ENCODE measurements at regions of chr1 and their contacts with region 1.

Region 1: DNA sequence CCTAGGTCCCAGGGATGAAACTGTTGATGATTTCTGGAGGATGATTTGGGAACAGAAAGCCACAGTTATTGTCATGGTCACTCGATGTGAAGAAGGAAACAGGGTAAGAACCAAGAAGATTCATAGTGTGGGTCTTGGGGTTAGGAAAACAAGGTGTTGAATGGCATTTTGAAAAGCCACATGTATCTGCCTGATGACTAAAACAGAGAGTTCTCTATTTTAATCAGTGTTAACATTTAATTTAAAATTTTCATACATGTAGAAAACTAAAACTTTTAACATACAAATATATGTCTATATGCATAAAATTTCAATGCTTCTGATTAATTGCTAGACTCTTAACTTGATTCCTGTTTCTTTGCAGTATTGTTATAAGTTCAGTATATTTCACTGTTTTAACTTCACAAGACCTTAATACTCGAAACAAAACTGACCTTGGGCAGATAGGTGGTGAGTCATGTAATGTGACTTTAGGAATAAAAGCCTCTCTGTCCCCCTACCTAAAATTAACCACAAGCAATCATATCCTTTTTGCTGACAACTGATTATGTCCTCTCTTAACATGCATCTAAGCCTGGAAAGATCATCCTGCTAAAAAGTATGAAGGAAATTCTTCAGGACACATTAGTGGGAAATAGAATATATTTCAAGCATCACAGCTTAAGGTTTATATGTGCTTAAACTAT is 95.6 kb downstream of the PTPRC start:
- DNase-seq: no peak
- ATAC-seq: peak; percentile 45
- H3K4me3 Mint-ChIP-seq: peak overlapping the region; percentile 17
- H3K27ac Mint-ChIP-seq: peak overlapping the region; percentile 74
- H3K4me1 Mint-ChIP-seq: peaks cover 21% of the 10 kb centered on the region
- H3K27me3 Mint-ChIP-seq: no peaks in the 10 kb centered on the region
- CTCF ChIP-seq: no peak

Region 2: GRCh38 chr1:197862671-197863070 is 871.8 kb before region 1 on chr1:
- CTCF ChIA-PET with region 1: no interaction called
- POLR2A ChIA-PET with region 1: no interaction called
- intact Hi-C with region 1: no loop called
- DNase-seq: no peak
- ATAC-seq: no peak
- H3K4me3 Mint-ChIP-seq: no peak overlapping the region
- H3K27ac Mint-ChIP-seq: no peak overlapping the region
- H3K4me1 Mint-ChIP-seq: no peaks in the 10 kb centered on the region
- H3K27me3 Mint-ChIP-seq: no peaks in the 10 kb centered on the region
- CTCF ChIP-seq: no peak

Region 3: DNA sequence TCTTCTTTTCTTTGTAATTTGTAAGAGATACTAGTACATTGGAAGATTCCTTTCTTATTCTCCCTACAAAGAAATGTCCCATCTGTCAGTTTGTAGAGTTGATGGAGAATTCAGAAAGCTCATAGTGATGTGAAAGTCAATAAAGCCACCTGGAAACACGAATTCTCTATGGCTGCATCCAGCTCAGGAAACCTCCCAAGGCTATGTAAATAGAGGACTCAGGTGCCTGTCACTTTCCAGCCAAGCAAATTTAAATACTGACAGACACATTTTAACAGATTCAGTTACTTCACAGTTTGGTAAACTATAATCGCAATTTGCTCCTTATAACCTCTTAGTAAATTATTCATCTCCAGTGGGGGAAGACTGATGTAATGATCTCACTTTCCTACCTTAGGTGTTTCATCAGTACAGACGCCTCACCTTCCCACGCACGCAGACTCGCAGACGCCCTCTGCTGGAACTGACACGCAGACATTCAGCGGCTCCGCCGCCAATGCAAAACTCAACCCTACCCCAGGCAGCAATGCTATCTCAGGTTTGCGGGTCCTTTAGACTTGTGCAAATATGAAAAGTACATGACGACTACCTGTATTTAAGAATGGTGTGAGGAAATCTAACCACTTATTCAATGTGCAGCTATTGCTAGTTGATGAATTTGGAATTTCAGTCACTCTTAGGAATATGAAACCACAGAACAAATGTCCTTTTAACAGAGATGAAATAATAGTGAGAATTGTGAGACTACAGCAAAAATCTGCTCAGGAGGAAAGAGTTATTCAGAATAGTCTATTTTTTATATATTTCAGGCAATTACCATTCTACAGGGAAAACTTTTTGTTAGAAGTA is 35.1 kb before region 1 on chr1:
- CTCF ChIA-PET with region 1: no interaction called
- POLR2A ChIA-PET with region 1: no interaction called
- intact Hi-C with region 1: loop called (anchors 5 kb)
- DNase-seq: no peak
- ATAC-seq: no peak
- H3K4me3 Mint-ChIP-seq: no peak overlapping the region
- H3K27ac Mint-ChIP-seq: peak overlapping the region; percentile 64
- H3K4me1 Mint-ChIP-seq: peaks cover 69% of the 10 kb centered on the region
- H3K27me3 Mint-ChIP-seq: no peaks in the 10 kb centered on the region
- CTCF ChIP-seq: no peak

Region 4: GRCh38 chr1:198720035-198720434 is 14.4 kb before region 1 on chr1:
- CTCF ChIA-PET with region 1: no interaction called
- POLR2A ChIA-PET with region 1: no interaction called
- intact Hi-C with region 1: loop called (anchors 2 kb)
- DNase-seq: no peak
- ATAC-seq: no peak
- H3K4me3 Mint-ChIP-seq: no peak overlapping the region
- H3K27ac Mint-ChIP-seq: no peak overlapping the region
- H3K4me1 Mint-ChIP-seq: peaks cover 10% of the 10 kb centered on the region
- H3K27me3 Mint-ChIP-seq: no peaks in the 10 kb centered on the region
- CTCF ChIP-seq: no peak

Measured in activated B cell treated with CpG ODN at 0.5 μM for 24 hours (primary cell).